MCF 10A (cell line): ENCODE measurements at regions of chr10 and their contacts with region 1.

Region 1: DNA sequence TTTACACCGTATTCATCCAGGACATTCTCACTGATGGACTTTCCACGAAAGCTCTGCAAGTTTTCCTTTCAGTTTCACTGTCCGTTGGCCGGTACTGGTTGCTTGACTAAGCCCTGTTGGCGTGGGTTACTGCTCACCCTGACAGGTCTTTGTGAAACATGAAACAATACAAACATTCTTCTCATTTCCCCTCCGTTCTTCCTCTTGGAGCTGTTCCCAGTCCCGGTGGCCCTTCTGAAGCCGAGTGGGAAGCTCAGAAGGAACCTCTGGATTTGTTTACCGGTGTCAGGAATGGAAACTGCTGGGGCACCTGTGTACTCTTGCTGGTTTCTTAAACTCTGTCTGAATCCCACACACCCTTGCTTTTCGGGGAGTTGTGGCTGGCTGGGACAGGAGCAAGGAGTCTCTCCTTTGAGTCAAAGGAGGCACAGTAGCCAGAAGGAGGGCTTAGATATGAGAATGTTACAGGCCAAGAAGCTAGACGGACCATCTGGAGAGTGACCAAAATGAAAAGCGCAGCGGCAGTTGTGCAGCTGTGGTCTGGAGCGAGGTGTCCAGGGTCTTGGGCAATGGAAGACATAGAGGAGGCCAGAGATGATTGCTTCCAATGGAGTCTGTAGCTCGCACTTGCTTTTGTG is 45.7 kb downstream of the LYZL2 start:
- DNase-seq: peak; percentile 82
- H3K4me3 Mint-ChIP-seq: peak overlapping the region; percentile 57
- H3K27ac Mint-ChIP-seq: peak overlapping the region; percentile 43
- H3K4me1 Mint-ChIP-seq: peaks cover 14% of the 10 kb centered on the region
- H3K27me3 Mint-ChIP-seq: no peaks in the 10 kb centered on the region
- CTCF ChIP-seq: no peak

Region 2: GRCh38 chr10:30270247-30270646 is 313.6 kb before region 1 on chr10:
- CTCF ChIA-PET with region 1: no interaction called
- POLR2A ChIA-PET with region 1: no interaction called
- intact Hi-C with region 1: loop called (anchors 10 kb)
- DNase-seq: no peak
- H3K4me3 Mint-ChIP-seq: no peak overlapping the region
- H3K27ac Mint-ChIP-seq: no peak overlapping the region
- H3K4me1 Mint-ChIP-seq: no peaks in the 10 kb centered on the region
- H3K27me3 Mint-ChIP-seq: peaks cover 56% of the 10 kb centered on the region
- CTCF ChIP-seq: no peak

Region 3: GRCh38 chr10:30392564-30392990 is 191.3 kb before region 1 on chr10:
- CTCF ChIA-PET with region 1: interaction called, 18 read pairs
- POLR2A ChIA-PET with region 1: no interaction called
- intact Hi-C with region 1: no loop called
- DNase-seq: peak; percentile 77
- H3K4me3 Mint-ChIP-seq: no peak overlapping the region
- H3K27ac Mint-ChIP-seq: no peak overlapping the region
- H3K4me1 Mint-ChIP-seq: peaks cover 14% of the 10 kb centered on the region
- H3K27me3 Mint-ChIP-seq: no peaks in the 10 kb centered on the region
- CTCF ChIP-seq: peak; percentile 98